Activated CD4-positive, alpha-beta memory T cell treated with anti-CD3 and anti-CD28 coated beads, Interleukin-2, amount 10 ng/mL, durations not matched to agents 7 days and 5 days (primary cell): ENCODE measurements at regions of chr1 and their contacts with region 1.

Region 1: GRCh38 chr1:23777979-23778814 is at the start of gene PITHD1:
- DNase-seq: peak; percentile 85
- H3K4me3 Mint-ChIP-seq: peak within 1 kb of the TSS; percentile 83
- H3K27ac Mint-ChIP-seq: peak within 1 kb of the TSS; percentile 81
- H3K4me1 Mint-ChIP-seq: peaks cover 56% of the 10 kb centered on the region
- H3K27me3 Mint-ChIP-seq: no peaks in the 10 kb centered on the region
- total RNA-seq, gene PITHD1: 50.0 to 51.6 TPM

Region 2: GRCh38 chr1:23691499-23692307 is 86.5 kb before region 1 on chr1 and contains the start of gene RPL11:
- CTCF ChIA-PET with region 1: interaction called, 3 read pairs
- POLR2A ChIA-PET with region 1: interaction called, 11 read pairs
- DNase-seq: peak; percentile 89
- H3K4me3 Mint-ChIP-seq: peak within 1 kb of the TSS; percentile 94
- H3K27ac Mint-ChIP-seq: peak within 1 kb of the TSS; percentile 86
- H3K4me1 Mint-ChIP-seq: peaks cover 49% of the 10 kb centered on the region
- H3K27me3 Mint-ChIP-seq: no peaks in the 10 kb centered on the region
- total RNA-seq, gene RPL11: 1,074 to 1,084 TPM

Region 3: DNA sequence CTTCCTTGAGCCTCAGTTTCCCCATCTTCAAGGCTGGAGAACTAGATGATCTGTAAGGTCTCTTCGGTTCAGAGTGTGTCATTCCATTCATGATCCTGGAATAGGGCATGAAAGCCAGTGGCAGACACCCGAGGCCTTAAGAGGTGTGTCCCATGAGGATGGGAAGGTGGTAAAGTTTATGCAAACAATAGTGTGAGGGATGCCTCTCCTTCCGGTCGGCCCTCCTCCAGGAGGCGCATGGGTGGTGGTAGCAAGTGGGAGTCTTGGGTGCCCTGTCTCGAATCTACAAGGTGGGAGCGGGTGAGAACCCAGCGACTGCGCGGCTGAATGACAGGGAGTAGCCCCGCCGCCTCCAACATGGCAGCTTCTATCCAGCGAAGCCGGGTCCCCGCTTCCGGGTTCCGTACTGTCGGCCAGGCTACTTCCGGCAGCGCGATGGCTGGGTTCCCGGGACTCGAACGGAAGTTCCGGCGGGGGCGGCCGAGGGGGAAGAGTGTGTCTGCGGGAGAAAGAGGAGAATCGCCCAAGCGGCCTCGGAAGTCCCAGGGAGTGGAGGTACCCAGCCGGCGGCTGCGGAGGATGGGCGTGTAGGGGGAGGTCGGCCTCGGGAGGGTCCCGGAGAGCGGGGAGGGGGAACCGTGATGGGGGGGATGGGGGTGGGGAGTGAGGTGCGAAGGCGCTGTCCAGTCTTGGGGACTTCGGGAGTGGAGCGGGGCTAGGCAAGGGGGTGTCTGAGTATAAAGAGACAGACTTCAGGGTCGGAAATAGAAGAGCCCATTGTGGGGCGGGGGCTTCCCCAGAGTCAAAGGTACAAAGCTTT is 12.7 kb after region 1 on chr1 and contains the start of gene LYPLA2:
- CTCF ChIA-PET with region 1: interaction called, 10 read pairs
- POLR2A ChIA-PET with region 1: interaction called, 115 read pairs
- DNase-seq: peak; percentile 90
- H3K4me3 Mint-ChIP-seq: peak within 1 kb of the TSS; percentile 94
- H3K27ac Mint-ChIP-seq: peak within 1 kb of the TSS; percentile 91
- H3K4me1 Mint-ChIP-seq: peaks cover 32% of the 10 kb centered on the region
- H3K27me3 Mint-ChIP-seq: no peaks in the 10 kb centered on the region
- total RNA-seq, gene LYPLA2: 76.1 to 80.8 TPM

Region 4: GRCh38 chr1:23800400-23801337 is 22.5 kb after region 1 on chr1 and contains the start of gene GALE:
- CTCF ChIA-PET with region 1: interaction called, 7 read pairs
- POLR2A ChIA-PET with region 1: interaction called, 61 read pairs
- DNase-seq: peak; percentile 98
- H3K4me3 Mint-ChIP-seq: peak within 1 kb of the TSS; percentile 96
- H3K27ac Mint-ChIP-seq: peak within 1 kb of the TSS; percentile 95
- H3K4me1 Mint-ChIP-seq: peaks cover 25% of the 10 kb centered on the region
- H3K27me3 Mint-ChIP-seq: no peaks in the 10 kb centered on the region
- total RNA-seq, gene GALE: 33.5 to 37.6 TPM

Region 5: GRCh38 chr1:23825076-23825761 is 47.0 kb after region 1 on chr1 and contains the start of gene HMGCL:
- CTCF ChIA-PET with region 1: interaction called, 3 read pairs
- POLR2A ChIA-PET with region 1: interaction called, 11 read pairs
- DNase-seq: peak; percentile 91
- H3K4me3 Mint-ChIP-seq: peak within 1 kb of the TSS; percentile 94
- H3K27ac Mint-ChIP-seq: peak within 1 kb of the TSS; percentile 87
- H3K4me1 Mint-ChIP-seq: peaks cover 25% of the 10 kb centered on the region
- H3K27me3 Mint-ChIP-seq: no peaks in the 10 kb centered on the region
- total RNA-seq, gene HMGCL: 33.5 to 35.7 TPM

Region 6: DNA sequence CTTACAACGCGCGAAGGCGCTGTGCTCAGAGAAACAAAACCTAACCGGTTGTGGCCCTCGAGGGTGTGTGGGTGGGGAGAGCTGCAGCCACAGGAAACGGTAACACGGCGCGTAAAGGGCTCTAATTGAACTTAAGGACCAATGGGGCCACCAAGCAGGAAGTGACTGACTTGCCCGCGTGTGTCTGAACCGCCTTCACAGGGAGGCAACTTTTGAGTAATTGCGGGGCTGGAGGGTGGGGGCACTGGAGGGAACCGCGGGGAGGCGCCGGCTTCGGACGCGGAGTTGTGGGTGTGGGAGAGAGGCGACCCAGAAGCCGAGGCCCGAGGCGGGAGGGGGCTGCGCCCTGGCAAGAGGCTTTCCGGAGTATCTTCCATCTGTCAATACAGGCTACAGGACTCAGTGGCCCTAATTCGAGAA is 180.9 kb after region 1 on chr1:
- CTCF ChIA-PET with region 1: no interaction called
- POLR2A ChIA-PET with region 1: interaction called, 22 read pairs
- DNase-seq: peak; percentile 95
- H3K4me3 Mint-ChIP-seq: peak overlapping the region; percentile 100
- H3K27ac Mint-ChIP-seq: peak overlapping the region; percentile 100
- H3K4me1 Mint-ChIP-seq: peaks cover 55% of the 10 kb centered on the region
- H3K27me3 Mint-ChIP-seq: peaks cover 2% of the 10 kb centered on the region

Region 7: DNA sequence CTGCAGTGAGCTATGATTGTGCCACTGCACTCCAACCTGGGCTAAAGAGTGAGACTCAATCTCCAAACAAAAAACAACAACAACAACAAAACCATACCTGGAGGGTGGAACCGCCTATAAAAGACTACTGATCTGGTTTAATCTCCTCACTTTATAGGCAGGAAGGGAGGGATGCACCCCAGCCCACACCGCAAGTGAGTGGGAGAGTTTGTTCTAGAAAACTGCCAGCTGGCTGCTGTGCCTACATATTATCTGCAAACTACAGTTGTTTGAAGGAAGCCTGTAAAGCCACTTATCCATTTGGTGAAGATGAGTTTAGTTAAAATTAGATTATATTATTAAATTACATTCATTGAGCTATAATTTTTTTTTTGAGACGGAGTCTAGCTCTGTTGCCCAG is 211.1 kb after region 1 on chr1:
- CTCF ChIA-PET with region 1: no interaction called
- POLR2A ChIA-PET with region 1: no interaction called
- DNase-seq: no peak
- H3K4me3 Mint-ChIP-seq: no peak overlapping the region
- H3K27ac Mint-ChIP-seq: no peak overlapping the region
- H3K4me1 Mint-ChIP-seq: peaks cover 11% of the 10 kb centered on the region
- H3K27me3 Mint-ChIP-seq: no peaks in the 10 kb centered on the region